CD14-positive monocyte (primary cell): ENCODE measurements at regions of chr19 and their contacts with region 1.

Region 1: DNA sequence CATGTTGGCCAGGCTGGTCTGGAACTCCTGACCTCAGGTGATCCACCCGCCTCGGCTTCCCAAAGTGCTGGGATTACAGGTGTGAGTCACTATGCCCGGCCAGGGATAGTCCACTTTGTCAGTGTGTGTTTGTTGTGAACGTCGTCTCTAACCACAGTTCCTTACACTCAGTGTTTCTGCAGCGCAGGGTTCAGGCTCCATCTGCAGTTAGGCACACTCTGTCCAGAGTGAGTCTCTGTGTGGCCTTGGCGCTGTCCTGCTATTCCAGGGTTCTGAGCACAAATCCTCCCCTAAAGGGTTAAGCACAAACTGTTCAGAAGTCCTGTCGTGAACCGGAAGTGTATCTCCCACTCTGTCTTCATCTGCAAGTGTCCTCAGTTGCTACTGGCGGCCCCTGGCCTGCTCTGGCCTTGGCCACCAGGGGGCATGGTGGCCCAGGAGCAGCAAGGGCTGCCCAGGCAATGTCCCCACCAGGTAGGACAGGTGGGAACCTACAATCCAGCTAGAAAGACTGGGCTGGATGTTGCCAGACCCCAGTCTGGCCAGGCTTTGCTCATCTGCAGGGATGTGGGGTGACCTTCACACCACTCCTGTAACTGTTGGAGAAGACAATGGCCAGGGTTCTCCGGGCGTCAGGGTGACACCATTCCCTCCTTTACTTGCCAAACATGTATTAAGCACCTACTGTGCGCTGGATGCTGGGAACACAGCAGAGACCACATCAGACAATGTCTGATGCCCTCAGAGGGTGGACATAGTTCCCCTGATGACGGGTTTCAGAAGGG is 38.7 kb upstream of the GATAD2A start:
- DNase-seq: peak; percentile 59 to 75 (median 75)
- H3K4me3 ChIP-seq: peak overlapping the region in 1 of 3 experiments; percentile 19
- H3K4me3 Mint-ChIP-seq: peak overlapping the region; percentile 37 to 70
- H3K27ac ChIP-seq: peak overlapping the region in 1 of 2 donors; percentile 33
- H3K27ac Mint-ChIP-seq: peak overlapping the region in 6 of 7 donors; percentile 25 to 81 (median 65)
- H3K4me1 ChIP-seq: peaks cover 23 to 25% of the 10 kb centered on the region in 2 donors
- H3K4me1 Mint-ChIP-seq: peaks cover 18% of the 10 kb centered on the region
- H3K27me3 ChIP-seq: no peaks in the 10 kb centered on the region
- H3K27me3 Mint-ChIP-seq: peaks cover 0 to 6% (median 3%) of the 10 kb centered on the region in 3 donors
- CTCF ChIP-seq: peak; percentile 99

Region 2: DNA sequence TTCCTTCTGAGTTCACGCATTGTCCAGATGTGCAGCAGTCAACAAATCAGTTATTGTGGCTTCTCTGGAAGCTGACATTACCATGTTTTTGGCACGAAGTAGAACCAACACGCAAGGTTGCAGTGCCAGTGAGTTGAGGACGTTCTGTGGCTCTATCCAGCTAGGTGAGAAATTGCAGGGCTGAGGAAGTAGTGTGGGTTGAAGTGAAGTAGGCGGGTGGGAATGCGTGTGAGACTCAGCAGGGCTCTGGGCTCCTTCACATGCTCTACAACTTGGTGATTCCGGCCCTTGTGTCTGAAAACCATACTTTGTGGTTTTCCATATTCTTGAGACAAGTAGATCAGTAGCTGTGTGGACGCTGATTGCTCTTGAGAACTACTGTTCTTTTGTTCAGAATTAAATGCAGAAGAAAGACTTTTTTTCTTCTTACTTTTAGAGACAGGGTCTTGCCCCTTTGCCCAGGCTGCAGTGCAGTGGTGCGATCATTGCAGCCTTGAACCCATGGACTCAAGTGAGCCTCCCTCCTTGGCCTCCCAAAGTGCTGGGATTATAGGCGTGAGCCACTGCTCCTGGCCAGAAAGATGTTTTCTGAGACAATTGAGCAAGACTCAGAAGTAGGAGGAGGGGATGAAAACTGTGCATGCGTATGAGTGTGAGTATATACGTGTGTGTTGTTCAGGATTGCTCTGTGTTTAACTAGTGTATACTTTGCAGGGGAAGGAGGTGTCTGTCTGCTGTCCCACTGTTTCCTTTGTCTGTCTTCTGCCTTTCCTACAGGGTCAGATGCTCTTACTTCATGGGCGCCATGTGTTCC is 84.8 kb after region 1 on chr19:
- intact Hi-C with region 1: no loop called
- DNase-seq: peak in 1 of 3 donors; percentile 28
- H3K4me3 ChIP-seq: no peak overlapping the region
- H3K4me3 Mint-ChIP-seq: no peak overlapping the region
- H3K27ac ChIP-seq: peak overlapping the region; percentile 2 to 62
- H3K27ac Mint-ChIP-seq: peak overlapping the region; percentile 67 to 90 (median 82)
- H3K4me1 ChIP-seq: peaks cover 27 to 37% of the 10 kb centered on the region in 2 donors
- H3K4me1 Mint-ChIP-seq: peaks cover 35% of the 10 kb centered on the region
- H3K27me3 ChIP-seq: no peaks in the 10 kb centered on the region
- H3K27me3 Mint-ChIP-seq: peaks cover 0 to 5% (median 0%) of the 10 kb centered on the region in 3 donors
- CTCF ChIP-seq: no peak

Region 3: DNA sequence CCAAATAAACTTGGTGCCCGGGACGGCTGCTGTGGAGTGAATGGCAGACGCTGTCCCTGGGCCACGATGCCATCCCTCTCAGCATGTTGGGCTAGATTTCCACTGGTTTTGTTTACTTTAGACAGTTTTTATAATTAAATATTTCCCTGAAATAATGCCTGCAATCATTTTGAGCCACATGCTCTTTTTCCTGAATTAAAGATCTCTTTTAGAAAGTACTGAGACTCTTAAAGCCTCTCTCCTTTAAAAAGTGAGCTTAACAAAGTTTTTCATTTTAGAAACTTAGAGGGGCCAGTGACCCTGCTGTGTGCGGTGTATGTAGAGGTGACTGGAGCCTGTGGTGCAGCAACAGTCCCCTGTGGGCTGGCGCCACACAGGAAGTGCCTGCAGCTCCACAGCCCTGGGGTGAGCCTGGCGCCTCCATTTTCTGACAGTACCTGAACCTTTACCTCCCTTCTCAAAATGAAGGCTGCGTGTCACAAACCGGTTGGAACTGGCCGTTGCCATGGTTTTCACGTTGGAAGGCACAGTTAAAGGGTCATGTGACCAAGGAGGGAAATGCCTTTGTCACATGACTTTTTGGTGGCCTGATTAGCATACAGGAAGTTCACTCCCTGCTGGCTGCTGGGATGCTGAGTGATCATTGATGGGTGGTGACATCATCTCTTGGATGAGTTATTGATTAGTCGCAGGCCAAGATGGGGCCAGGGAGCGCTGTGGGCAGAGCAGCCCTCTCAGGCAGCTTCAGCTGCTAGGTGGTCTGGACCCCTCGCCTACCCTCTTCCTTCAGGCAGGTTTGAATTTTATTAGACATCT is 122.3 kb after region 1 on chr19:
- intact Hi-C with region 1: loop called (anchors 2 kb)
- DNase-seq: peak; percentile 93 to 99 (median 98)
- H3K4me3 ChIP-seq: peak overlapping the region; percentile 0 to 63 (median 9)
- H3K4me3 Mint-ChIP-seq: peak overlapping the region; percentile 62 to 75
- H3K27ac ChIP-seq: peak overlapping the region; percentile 87 to 94
- H3K27ac Mint-ChIP-seq: peak overlapping the region; percentile 94 to 97 (median 96)
- H3K4me1 ChIP-seq: peaks cover 23 to 32% of the 10 kb centered on the region in 2 donors
- H3K4me1 Mint-ChIP-seq: peaks cover 39% of the 10 kb centered on the region
- H3K27me3 ChIP-seq: no peaks in the 10 kb centered on the region
- H3K27me3 Mint-ChIP-seq: peaks cover 0 to 4% (median 0%) of the 10 kb centered on the region in 3 donors
- CTCF ChIP-seq: no peak